ENCODE measurements at regions of chr17 and their contacts with region 1.

Region 1: DNA sequence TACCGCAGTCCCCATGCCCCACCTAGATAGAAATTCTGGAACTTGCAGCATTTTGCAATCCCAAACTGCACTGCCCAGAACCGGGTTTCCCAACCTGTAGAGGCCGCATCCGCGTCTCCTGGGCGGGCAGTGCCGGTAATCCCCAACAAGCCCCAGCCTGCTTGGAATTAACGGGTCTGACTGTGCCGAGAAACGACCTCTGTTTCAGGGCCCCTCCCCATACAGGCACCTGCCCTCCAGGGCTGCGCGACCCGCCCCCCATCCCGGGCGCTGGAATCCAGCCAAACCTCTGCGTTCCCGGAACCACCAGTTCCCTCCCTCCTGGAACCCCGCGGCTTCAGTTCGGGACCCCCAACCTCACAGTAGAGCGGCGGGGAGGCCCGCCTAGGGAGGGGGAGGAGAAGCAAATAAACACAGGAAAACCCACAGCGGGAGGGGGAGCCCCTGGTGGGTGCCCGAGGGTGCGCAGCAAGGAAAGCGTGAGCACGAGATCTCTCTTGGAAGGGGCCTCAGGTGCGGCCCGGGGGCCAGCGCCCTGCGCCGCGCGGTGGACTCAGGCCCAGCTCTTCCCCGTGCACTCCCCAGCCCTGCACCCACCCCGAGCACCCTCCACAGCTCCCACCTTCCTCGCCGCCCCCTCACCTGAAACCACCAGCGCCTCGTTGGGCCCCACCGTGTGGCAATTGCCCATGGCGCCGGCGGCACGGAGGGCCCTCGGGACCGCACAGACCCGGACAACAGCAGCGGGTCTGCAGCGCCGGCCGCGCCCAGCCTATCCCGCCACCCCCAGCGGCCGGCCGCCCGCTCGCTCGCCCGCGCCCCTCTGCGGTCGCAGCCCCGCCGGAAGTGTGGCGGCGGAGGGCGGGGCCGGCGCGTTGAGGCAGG is at the start of gene FLOT2:
- DNase-seq: peak; percentile 47 to 64
- ATAC-seq: peak; percentile 77 to 91 (median 82)
- H3K4me3 ChIP-seq: peak within 1 kb of the TSS; percentile 65 to 98 (median 90)
- H3K27ac ChIP-seq: peak within 1 kb of the TSS; percentile 74 to 97 (median 91)
- H3K4me1 ChIP-seq: peaks cover 7 to 61% (median 44%) of the 10 kb centered on the region in 9 donors
- H3K27me3 ChIP-seq: no peaks in the 10 kb centered on the region
- CTCF ChIP-seq: peak in 4 of 9 donors; percentile 17 to 51 (median 39)
- total RNA-seq, gene FLOT2: 82.8 to 159 (median 90.7) TPM

Region 2: DNA sequence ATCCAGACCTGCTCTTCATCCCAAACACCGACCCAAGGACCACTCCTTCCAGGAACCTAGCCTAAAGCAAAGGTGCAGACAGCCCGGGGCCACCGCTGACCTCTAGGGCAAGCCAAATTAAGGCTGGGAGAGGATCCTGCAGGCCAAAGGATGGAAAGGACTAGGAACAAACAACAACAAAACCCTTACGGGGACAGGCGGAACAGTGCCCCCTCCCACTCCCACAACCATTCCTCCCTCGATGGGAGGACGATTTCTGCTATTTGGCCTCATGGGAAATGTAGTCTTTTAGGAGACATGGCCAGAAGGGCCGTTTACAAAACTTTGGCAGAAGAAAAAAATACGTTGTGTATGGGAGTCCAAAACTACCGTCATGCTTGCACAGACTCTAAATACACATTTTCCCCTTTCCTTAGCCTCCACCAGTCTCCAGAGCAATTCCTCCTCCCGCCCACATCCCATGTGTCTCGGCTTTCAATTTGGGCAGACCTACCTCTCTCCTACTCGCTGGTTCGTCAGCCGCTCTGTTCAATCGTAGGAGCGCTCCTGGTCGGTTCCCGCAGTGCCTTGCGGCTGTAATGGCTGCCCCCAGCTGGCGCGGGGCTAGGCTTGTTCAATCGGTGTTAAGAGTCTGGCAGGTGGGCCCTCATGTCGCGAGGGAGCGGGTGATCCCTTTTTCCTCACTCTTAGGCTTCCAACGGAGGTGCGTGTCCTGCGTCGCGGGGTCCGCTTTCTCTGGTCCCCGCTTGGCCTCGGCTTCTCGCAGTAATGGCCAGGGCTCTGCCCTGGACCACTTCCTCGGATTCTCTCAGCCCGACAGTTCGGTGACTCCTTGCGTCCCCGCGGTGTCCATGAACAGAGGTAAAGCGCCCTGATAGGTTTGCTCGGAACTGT is 42.4 kb before region 1 on chr17 and contains the start of gene ERAL1:
- intact Hi-C with region 1: loop called in 4 of 10 experiments (anchors 5 to 10 kb)
- DNase-seq: peak; percentile 76 to 87
- ATAC-seq: peak; percentile 98 to 100 (median 99)
- H3K4me3 ChIP-seq: peak within 1 kb of the TSS; percentile 68 to 98 (median 80)
- H3K27ac ChIP-seq: peak within 1 kb of the TSS; percentile 44 to 87 (median 75)
- H3K4me1 ChIP-seq: peaks cover 5 to 16% (median 12%) of the 10 kb centered on the region in 9 donors
- H3K27me3 ChIP-seq: no peaks in the 10 kb centered on the region
- CTCF ChIP-seq: no peak
- total RNA-seq, gene ERAL1: 34.2 to 41.6 (median 39.2) TPM

Measured in heart right ventricle (tissue), 16 donors.